GM12878 (cell line): ENCODE measurements at regions of chr2 and their contacts with region 1.

Region 1: DNA sequence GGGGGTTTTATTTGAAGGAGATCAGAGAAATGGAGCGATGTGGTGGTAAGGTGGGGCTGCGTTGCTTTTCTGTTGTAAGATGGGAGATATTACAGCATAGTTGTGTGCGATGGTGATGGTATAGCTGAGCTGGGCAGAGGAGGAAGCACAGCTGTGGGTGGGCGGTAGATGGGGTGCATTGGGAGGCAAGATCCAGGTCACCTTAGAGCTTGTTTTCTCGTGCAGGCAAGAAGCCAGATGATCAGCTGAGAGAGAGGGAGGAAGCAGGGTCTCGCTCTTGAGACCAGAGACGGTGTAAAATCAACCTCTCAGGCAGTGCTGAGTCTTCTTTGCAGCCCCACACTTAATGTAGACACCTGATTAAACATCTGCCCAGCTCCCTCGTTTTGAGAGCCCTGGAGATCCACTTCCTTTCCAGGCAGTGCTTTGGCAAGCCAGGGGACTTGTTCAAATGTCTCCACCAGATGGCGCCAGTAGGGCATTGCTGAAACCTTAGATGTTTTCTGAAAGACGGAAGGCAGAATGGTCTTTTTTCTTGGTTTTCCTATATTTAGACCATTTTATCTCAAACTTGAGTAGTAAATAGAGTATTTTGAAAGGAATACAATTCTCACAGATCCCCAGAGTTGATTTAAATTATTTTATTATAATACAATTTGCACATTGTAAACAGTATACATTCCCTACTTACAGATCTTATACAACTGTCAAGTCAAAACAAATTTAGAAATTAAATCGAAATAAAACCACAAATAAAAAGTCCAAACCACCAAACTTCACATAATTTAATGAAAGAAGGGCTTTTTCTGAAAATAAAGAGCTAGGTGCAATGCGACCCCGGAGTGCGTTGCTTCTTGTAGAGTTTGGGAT is 21.1 kb upstream of the LYPD6B start:
- DNase-seq: peak; percentile 53
- ATAC-seq: peak; percentile 21
- H3K4me3 ChIP-seq: no peak overlapping the region
- H3K27ac ChIP-seq: no peak overlapping the region
- H3K4me1 ChIP-seq: peaks cover 34% of the 10 kb centered on the region
- H3K27me3 ChIP-seq: no peaks in the 10 kb centered on the region
- CTCF ChIP-seq: peak; percentile 82 to 88 (median 87); a peak in 5 of 6 replicates
- EP300 ChIP-seq: no peak
- POLR2A ChIP-seq: no peak
- RAD21 ChIP-seq: peak; percentile 99

Region 2: GRCh38 chr2:148914463-148914862 is 102.9 kb before region 1 on chr2:
- CTCF ChIA-PET with region 1: no interaction called
- POLR2A ChIA-PET with region 1: no interaction called
- RAD21 ChIA-PET with region 1: no interaction called
- SMC1A ChIA-PET with region 1: no interaction called
- in situ Hi-C with region 1: no loop called
- intact Hi-C with region 1: no loop called
- DNase-seq: no peak
- ATAC-seq: no peak
- H3K4me3 ChIP-seq: no peak overlapping the region
- H3K27ac ChIP-seq: no peak overlapping the region
- H3K4me1 ChIP-seq: no peaks in the 10 kb centered on the region
- H3K27me3 ChIP-seq: no peaks in the 10 kb centered on the region; a peak in 1 of 4 replicates
- CTCF ChIP-seq: no peak
- EP300 ChIP-seq: no peak
- POLR2A ChIP-seq: no peak
- RAD21 ChIP-seq: no peak

Region 3: GRCh38 chr2:148989882-148990493 is 27.4 kb before region 1 on chr2:
- CTCF ChIA-PET with region 1: interaction called, 17 read pairs
- POLR2A ChIA-PET with region 1: no interaction called
- RAD21 ChIA-PET with region 1: no interaction called
- SMC1A ChIA-PET with region 1: interaction called, 3 read pairs
- in situ Hi-C with region 1: no loop called
- intact Hi-C with region 1: no loop called
- DNase-seq: peak; percentile 23
- ATAC-seq: peak; percentile 98
- H3K4me3 ChIP-seq: no peak overlapping the region
- H3K27ac ChIP-seq: no peak overlapping the region
- H3K4me1 ChIP-seq: no peaks in the 10 kb centered on the region
- H3K27me3 ChIP-seq: no peaks in the 10 kb centered on the region
- CTCF ChIP-seq: peak; percentile 57 to 76 (median 72); a peak in 5 of 6 replicates
- EP300 ChIP-seq: no peak
- POLR2A ChIP-seq: no peak
- RAD21 ChIP-seq: peak; percentile 97

Region 4: GRCh38 chr2:149033716-149034115 is 16.4 kb after region 1 on chr2:
- CTCF ChIA-PET with region 1: interaction called, 508 read pairs
- POLR2A ChIA-PET with region 1: interaction called, 5 read pairs
- RAD21 ChIA-PET with region 1: interaction called, 107 read pairs
- SMC1A ChIA-PET with region 1: interaction called, 327 read pairs
- in situ Hi-C with region 1: no loop called
- intact Hi-C with region 1: loop called (anchors 2 kb)
- DNase-seq: no peak
- ATAC-seq: no peak
- H3K4me3 ChIP-seq: no peak overlapping the region
- H3K27ac ChIP-seq: no peak overlapping the region
- H3K4me1 ChIP-seq: peaks cover 23% of the 10 kb centered on the region
- H3K27me3 ChIP-seq: no peaks in the 10 kb centered on the region
- CTCF ChIP-seq: no peak
- EP300 ChIP-seq: no peak
- POLR2A ChIP-seq: no peak
- RAD21 ChIP-seq: no peak

Region 5: DNA sequence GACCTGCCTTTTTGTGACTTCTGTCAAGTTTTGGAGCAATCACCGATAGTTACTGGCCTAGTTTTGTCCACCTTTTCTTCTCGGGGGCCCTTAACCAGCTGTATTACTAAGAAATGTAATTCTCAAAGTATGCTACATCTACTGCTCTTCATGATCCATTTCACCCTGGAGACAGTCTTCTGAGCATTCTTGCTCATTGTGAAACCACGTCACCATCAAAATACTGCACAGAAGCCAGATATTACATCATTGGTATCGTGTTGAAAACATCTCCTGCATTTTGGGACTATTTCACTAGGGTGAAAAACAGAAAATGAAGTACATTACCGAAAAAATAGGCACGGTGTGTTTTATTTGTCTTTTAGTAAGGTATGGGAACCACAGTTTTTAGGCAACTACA is 32.8 kb after region 1 on chr2:
- CTCF ChIA-PET with region 1: interaction called, 16 read pairs
- POLR2A ChIA-PET with region 1: no interaction called
- RAD21 ChIA-PET with region 1: interaction called, 3 read pairs
- SMC1A ChIA-PET with region 1: interaction called, 8 read pairs
- in situ Hi-C with region 1: no loop called
- intact Hi-C with region 1: no loop called
- DNase-seq: peak; percentile 28
- ATAC-seq: peak; percentile 96
- H3K4me3 ChIP-seq: no peak overlapping the region
- H3K27ac ChIP-seq: peak overlapping the region; percentile 60
- H3K4me1 ChIP-seq: peaks cover 18% of the 10 kb centered on the region
- H3K27me3 ChIP-seq: no peaks in the 10 kb centered on the region
- CTCF ChIP-seq: no peak
- EP300 ChIP-seq: no peak
- POLR2A ChIP-seq: no peak
- RAD21 ChIP-seq: no peak

Region 6: DNA sequence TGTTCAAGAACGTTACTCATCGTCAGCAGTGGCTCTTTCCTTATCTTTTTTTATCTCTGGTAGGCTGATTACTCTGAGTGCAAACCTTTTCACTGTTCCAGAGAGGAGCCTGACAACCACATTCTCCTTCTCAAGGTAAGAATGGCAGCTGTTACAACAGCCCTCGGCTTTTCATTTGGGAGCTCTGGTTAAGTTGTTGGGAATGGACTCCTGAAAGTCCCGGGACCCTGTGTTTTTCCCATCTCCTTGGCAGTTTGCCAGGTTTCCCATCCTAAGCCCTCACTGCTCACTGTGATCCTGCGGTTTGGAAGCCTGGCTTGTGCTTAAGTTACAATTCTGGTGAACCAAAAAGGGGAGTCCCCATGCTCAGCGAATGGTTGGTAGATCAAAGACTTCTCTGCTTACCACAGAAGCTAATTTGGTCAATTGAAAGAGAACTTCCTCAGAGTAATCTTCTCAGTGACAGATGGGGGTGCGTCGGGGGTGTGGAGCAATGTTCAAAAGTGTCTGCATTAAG is 143.4 kb after region 1 on chr2:
- CTCF ChIA-PET with region 1: no interaction called
- POLR2A ChIA-PET with region 1: no interaction called
- RAD21 ChIA-PET with region 1: no interaction called
- SMC1A ChIA-PET with region 1: interaction called, 5 read pairs
- in situ Hi-C with region 1: no loop called
- intact Hi-C with region 1: loop called (anchors 2 kb)
- DNase-seq: peak; percentile 71
- ATAC-seq: peak; percentile 100
- H3K4me3 ChIP-seq: 0 out of 2 replicates have a peak overlapping the region, but pooled peaks have one; percentile 9
- H3K27ac ChIP-seq: no peak overlapping the region
- H3K4me1 ChIP-seq: peaks cover 14% of the 10 kb centered on the region
- H3K27me3 ChIP-seq: no peaks in the 10 kb centered on the region
- CTCF ChIP-seq: no peak
- EP300 ChIP-seq: no peak
- POLR2A ChIP-seq: no peak
- RAD21 ChIP-seq: no peak

Region 7: GRCh38 chr2:149451417-149452109 is 434.2 kb after region 1 on chr2:
- CTCF ChIA-PET with region 1: interaction called, 3 read pairs
- POLR2A ChIA-PET with region 1: no interaction called
- RAD21 ChIA-PET with region 1: no interaction called
- SMC1A ChIA-PET with region 1: interaction called, 3 read pairs
- in situ Hi-C with region 1: no loop called
- intact Hi-C with region 1: loop called (anchors 5 kb)
- DNase-seq: no peak
- ATAC-seq: peak; percentile 72
- H3K4me3 ChIP-seq: no peak overlapping the region
- H3K27ac ChIP-seq: no peak overlapping the region
- H3K4me1 ChIP-seq: no peaks in the 10 kb centered on the region
- H3K27me3 ChIP-seq: no peaks in the 10 kb centered on the region
- CTCF ChIP-seq: no peak
- EP300 ChIP-seq: no peak
- POLR2A ChIP-seq: no peak
- RAD21 ChIP-seq: no peak

Region 8: DNA sequence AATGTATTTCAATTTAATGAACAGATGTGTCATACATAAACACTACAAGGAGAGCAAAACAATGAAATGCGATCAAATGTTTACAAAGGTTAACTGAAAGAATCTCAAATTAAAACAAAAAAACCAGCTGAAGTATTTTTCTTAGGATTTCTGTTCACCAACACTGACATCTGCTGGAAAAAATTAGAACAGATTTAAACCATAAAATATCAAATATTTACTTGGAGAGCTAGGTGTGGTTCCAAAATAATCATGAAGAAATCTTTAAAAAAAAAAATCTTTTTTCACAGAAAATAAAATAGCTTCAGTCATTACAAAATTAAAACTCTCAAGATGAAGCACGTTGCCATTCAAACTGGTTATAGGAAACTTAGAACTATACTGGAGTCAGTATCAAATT is 556.4 kb after region 1 on chr2:
- CTCF ChIA-PET with region 1: interaction called, 7 read pairs
- POLR2A ChIA-PET with region 1: interaction called, 4 read pairs
- RAD21 ChIA-PET with region 1: interaction called, 11 read pairs
- SMC1A ChIA-PET with region 1: interaction called, 4 read pairs
- in situ Hi-C with region 1: no loop called
- intact Hi-C with region 1: no loop called
- DNase-seq: no peak
- ATAC-seq: no peak
- H3K4me3 ChIP-seq: no peak overlapping the region
- H3K27ac ChIP-seq: no peak overlapping the region
- H3K4me1 ChIP-seq: no peaks in the 10 kb centered on the region
- H3K27me3 ChIP-seq: no peaks in the 10 kb centered on the region
- CTCF ChIP-seq: peak in 1 of 3 experiments; percentile 2; a peak in 1 of 6 replicates
- EP300 ChIP-seq: no peak
- POLR2A ChIP-seq: no peak
- RAD21 ChIP-seq: no peak